Activated CD4-positive, alpha-beta T cell treated with anti-CD3 and anti-CD28 coated beads for 36 hours (primary cell): ENCODE measurements at regions of chr6 and their contacts with region 1.

Region 1: DNA sequence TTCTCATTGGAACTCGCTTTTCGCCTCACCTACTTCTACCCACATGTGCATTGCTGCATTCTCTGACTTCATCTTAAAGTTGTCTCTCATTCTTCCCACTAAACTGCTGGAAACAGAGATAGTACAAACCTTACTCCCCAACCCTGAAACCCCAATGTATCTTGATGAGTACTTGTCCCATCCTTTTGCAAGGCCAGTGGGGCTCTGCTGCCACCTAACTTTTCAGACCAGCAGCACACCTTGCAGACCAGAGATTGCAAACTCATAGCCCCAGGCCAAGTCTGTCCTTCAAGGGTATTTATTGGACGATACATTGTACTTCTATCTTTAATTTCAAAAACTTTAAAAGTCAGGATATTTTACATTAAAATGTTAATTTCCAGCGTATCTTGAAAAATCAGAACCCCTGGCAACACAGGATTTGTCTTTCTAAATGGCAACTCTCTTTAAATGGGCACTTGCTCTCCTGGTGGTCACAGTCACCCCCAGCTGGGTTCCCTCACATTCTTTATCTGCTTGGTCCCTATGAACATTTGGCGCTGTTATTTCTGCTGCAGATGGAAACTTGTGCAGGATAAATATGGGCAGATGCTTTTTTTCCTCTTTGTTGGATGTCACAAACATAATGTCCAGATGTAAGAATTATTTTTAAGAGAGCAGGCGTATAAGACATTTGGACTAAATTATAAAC is 83.9 kb downstream of the SOD2 start:
- DNase-seq: peak; percentile 50
- ATAC-seq: no peak
- H3K4me3 Mint-ChIP-seq: no peak overlapping the region
- H3K27ac Mint-ChIP-seq: no peak overlapping the region
- H3K4me1 Mint-ChIP-seq: no peaks in the 10 kb centered on the region
- H3K27me3 Mint-ChIP-seq: peaks cover 2% of the 10 kb centered on the region

Region 2: DNA sequence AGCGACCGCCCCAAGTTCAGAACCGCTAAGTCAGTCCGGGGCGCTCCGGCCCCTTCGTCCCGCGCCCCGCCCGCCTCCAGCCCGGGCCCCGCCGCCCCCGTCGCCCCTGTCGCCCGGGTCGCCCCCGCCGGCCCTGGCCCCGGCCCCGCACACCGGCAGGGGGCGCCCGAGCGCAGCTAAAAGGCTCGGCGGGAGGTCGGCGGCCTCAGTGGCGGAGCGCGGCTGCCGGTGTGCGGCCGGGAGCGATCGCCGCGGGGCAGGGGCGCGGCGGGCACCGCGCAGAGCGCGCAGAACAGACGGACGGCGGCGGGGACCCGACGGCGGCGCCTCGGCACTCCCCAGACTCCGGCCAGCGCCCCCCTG is 439.9 kb before region 1 on chr6 and contains the start of gene FNDC1:
- CTCF ChIA-PET with region 1: interaction called, 3 read pairs
- POLR2A ChIA-PET with region 1: no interaction called
- intact Hi-C with region 1: loop called in 1 of 2 experiments (anchors 1 kb)
- DNase-seq: peak; percentile 82
- ATAC-seq: peak; percentile 87
- H3K4me3 Mint-ChIP-seq: peak within 1 kb of the TSS; percentile 60
- H3K27ac Mint-ChIP-seq: no peak within 1 kb of the TSS
- H3K4me1 Mint-ChIP-seq: peaks cover 16% of the 10 kb centered on the region
- H3K27me3 Mint-ChIP-seq: peaks cover 80% of the 10 kb centered on the region
- total RNA-seq, gene FNDC1: not detected

Region 3: DNA sequence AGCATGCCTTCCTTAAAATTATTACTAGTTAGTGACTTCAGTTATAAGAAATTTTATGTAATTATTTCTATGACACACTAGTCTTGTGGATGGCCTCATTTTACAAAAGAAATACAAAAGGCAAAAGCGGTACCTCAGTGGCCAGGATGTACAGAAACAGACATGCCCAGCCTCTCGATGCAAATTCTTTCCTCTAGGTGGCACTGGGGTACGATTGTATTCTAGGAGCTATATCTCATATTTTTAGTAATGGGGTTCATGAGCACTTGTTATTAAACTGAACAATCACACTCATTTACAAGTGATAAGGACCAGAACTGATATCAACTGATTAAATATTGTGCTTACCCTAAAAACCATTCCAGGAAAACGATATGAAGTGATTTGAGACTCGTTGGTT is 24.1 kb after region 1 on chr6:
- CTCF ChIA-PET with region 1: no interaction called
- POLR2A ChIA-PET with region 1: no interaction called
- intact Hi-C with region 1: no loop called
- DNase-seq: peak; percentile 11
- ATAC-seq: no peak
- H3K4me3 Mint-ChIP-seq: no peak overlapping the region
- H3K27ac Mint-ChIP-seq: no peak overlapping the region
- H3K4me1 Mint-ChIP-seq: no peaks in the 10 kb centered on the region
- H3K27me3 Mint-ChIP-seq: no peaks in the 10 kb centered on the region

Region 4: GRCh38 chr6:159761873-159762680 is 153.0 kb after region 1 on chr6 and contains the start of gene ACAT2:
- CTCF ChIA-PET with region 1: no interaction called
- POLR2A ChIA-PET with region 1: no interaction called
- intact Hi-C with region 1: no loop called
- DNase-seq: peak; percentile 96
- ATAC-seq: peak; percentile 97
- H3K4me3 Mint-ChIP-seq: peak within 1 kb of the TSS; percentile 95
- H3K27ac Mint-ChIP-seq: peak within 1 kb of the TSS; percentile 95
- H3K4me1 Mint-ChIP-seq: peaks cover 27% of the 10 kb centered on the region
- H3K27me3 Mint-ChIP-seq: no peaks in the 10 kb centered on the region
- total RNA-seq, gene ACAT2: 55.0 to 82.1 TPM

Region 5: DNA sequence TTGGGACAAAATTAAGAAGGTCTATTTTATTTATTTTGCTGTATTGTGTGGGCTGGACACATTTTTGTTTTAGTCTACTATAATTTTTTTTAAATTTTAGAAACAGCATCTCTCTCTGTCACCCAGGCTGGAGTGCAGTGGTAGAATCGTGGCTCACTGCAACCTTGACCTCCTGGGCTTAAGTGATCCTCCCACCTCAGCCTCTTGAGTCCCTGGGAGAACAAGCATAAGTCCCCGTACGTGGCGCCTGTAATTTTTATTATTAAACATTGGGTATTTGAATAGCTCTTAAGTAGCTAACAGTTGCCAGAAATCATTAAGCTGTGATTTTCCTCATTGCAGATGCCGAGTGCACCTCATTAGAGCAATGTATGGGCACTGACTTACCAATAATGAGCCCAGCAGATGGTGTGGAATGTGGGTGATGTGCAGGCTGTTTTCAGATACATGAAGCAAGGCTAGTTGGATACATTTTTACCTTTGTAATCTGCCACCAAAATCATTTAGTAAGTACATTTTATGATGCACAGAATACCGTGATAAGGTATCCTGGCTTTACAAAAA is 271.4 kb after region 1 on chr6:
- CTCF ChIA-PET with region 1: no interaction called
- POLR2A ChIA-PET with region 1: no interaction called
- intact Hi-C with region 1: no loop called
- DNase-seq: no peak
- ATAC-seq: no peak
- H3K4me3 Mint-ChIP-seq: no peak overlapping the region
- H3K27ac Mint-ChIP-seq: no peak overlapping the region
- H3K4me1 Mint-ChIP-seq: no peaks in the 10 kb centered on the region
- H3K27me3 Mint-ChIP-seq: peaks cover 4% of the 10 kb centered on the region